PC-9 (cell line): ENCODE measurements at regions of chr12 and their contacts with region 1.

Region 1: DNA sequence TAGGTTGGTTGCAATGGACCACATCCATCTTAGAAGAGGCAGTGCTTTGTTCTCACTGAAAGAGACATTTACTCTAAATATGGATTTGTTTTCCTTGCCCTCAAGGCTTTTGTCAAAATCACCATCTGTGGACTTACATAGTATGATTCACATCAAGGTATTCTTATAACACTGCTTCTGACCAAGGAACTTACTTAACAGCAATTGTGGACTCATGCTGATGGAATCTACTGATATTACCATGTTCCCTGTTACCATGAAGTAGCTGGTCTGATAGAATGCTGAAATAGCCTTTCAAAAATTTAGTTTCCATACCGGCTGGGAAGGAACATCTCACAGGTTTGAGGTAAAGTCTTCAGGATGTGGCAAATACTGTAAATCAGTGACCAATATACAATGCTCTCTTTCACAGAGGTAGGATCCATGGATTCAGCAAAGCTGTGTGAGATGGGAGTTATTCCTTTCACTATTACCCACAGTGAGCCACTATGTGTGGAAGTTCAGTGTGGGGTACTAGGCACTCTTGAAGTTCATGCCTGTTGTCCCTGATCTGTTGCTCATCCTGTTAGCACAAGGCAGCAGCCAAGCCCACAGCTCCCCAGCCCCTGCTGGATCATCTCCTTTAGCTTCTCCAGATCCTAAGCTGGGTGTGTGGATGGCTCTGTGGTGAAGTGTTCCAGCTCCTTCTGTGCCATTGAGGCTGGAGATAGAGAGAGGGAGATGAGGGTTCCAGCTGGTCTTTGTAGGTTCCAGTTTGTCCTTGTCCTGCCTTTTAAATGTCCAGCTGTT is 126.4 kb downstream of the ATP23 start:
- DNase-seq: peak; percentile 22 to 99
- H3K4me3 ChIP-seq: no peak overlapping the region
- H3K27ac ChIP-seq: peak overlapping the region; percentile 57
- H3K4me1 ChIP-seq: peaks cover 39% of the 10 kb centered on the region
- H3K27me3 ChIP-seq: no peaks in the 10 kb centered on the region
- CTCF ChIP-seq: no peak

Region 2: GRCh38 chr12:57993025-57993424 is 74.8 kb before region 1 on chr12:
- CTCF ChIA-PET with region 1: no interaction called
- POLR2A ChIA-PET with region 1: no interaction called
- intact Hi-C with region 1: loop called (anchors 5 kb)
- DNase-seq: no peak
- H3K4me3 ChIP-seq: no peak overlapping the region
- H3K27ac ChIP-seq: no peak overlapping the region
- H3K4me1 ChIP-seq: no peaks in the 10 kb centered on the region
- H3K27me3 ChIP-seq: no peaks in the 10 kb centered on the region
- CTCF ChIP-seq: peak; percentile 59